ENCODE measurements at regions of chr10 and their contacts with region 1.

Region 1: DNA sequence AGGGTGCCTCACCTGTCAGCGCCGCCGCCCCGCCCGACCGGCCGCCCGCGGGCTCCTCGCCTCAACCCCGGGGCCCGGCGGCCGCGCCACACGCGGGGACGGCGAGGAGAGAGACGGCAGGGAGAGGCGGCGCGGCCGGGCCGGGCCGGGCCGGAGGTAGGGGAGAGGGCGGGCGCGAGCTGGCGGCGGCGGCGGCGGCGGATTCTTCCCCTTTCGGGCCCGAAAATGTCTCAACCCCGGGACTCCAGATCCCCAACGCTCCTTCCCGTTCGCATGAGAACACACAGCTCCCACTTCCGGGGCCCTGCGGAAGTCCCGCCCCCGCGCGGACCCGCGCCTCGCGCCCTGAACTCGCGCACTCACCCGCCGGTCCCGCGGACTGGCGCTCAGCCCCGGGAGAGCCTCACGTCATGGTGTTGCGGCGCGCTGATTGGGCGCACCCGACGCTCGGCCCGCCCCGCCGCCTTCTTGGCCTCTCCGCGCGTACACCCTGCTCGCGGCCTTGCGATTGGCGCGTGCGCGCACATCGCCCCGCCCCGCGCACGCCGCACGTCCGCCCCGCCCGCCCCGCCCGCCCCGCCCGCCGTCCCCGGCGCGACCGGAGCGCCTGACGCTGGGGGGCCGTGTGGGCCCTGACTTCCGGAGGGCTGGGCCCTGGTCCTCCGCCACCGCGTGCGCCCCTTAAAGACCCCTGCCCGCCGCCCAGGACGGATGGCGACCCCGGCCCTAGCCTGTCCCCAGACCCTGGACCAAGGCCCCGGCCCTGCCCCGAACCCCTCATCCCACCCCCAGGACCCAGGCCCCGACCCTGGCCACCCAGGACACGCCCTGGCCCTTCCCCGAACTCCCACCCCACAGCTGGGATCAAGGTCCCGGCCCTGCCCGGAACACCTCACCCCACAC is at the start of gene LARP4B:
- DNase-seq: peak; percentile 94 to 99
- H3K4me3 ChIP-seq: peak within 1 kb of the TSS; percentile 88 to 96
- H3K27ac ChIP-seq: peak within 1 kb of the TSS; percentile 93 to 98
- H3K4me1 ChIP-seq: peaks cover 0 to 44% (median 29%) of the 10 kb centered on the region in 4 donors
- H3K27me3 ChIP-seq: no peaks in the 10 kb centered on the region
- CTCF ChIP-seq: no peak

Region 2: DNA sequence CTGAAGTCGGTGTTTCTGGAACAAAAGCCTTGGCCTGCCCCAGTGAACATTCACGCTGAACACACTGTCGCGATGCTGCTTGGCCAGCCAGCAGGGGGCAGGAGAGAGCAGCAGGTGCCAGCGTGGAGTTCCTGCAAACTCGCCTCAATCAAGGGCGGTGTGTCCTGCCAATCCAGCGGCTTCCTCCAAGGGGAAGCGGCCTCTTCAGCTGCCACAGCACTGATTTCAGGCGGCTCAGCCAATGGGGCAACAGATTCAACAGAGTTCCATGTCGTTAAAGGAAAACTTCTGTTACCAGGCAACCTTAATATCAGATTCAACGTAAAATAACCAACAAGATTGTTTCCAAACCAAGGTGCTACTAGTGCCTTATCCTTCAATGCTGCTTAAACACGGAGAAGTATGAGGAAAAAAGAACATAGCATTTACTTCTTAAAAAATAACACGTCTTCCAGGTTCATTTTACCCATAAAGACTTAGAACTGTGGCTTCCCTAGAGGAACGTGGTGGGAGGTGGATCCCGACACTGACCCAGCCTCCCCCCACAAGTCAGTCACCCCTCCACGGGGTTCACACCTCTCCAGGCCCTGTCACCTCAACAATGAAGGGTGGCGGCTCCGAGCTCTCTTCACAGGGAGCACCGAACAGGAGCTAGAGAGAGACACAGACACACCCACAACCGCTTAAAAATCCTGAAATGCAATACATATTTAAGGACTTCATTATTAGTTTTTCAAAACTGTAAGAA is 420.4 kb before region 1 on chr10:
- intact Hi-C with region 1: loop called (anchors 10 kb)
- DNase-seq: peak; percentile 89 to 95
- H3K4me3 ChIP-seq: no peak overlapping the region
- H3K27ac ChIP-seq: peak overlapping the region; percentile 31 to 32
- H3K4me1 ChIP-seq: peaks cover 0 to 34% (median 17%) of the 10 kb centered on the region in 4 donors
- H3K27me3 ChIP-seq: no peaks in the 10 kb centered on the region
- CTCF ChIP-seq: peak; percentile 93 to 95

Region 3: GRCh38 chr10:987870-988666 is 56.4 kb after region 1 on chr10 and contains the start of gene GTPBP4:
- intact Hi-C with region 1: loop called (anchors 2 kb)
- DNase-seq: peak; percentile 98
- H3K4me3 ChIP-seq: peak within 1 kb of the TSS; percentile 80 to 87
- H3K27ac ChIP-seq: peak within 1 kb of the TSS; percentile 81 to 93
- H3K4me1 ChIP-seq: peaks cover 0 to 29% (median 21%) of the 10 kb centered on the region in 4 donors
- H3K27me3 ChIP-seq: no peaks in the 10 kb centered on the region
- CTCF ChIP-seq: no peak

Region 4: GRCh38 chr10:1056326-1057105 is 124.8 kb after region 1 on chr10 and contains the start of gene WDR37:
- intact Hi-C with region 1: loop called (anchors 5 kb)
- DNase-seq: peak; percentile 82 to 92
- H3K4me3 ChIP-seq: peak within 1 kb of the TSS; percentile 69 to 88
- H3K27ac ChIP-seq: peak within 1 kb of the TSS; percentile 96 to 99
- H3K4me1 ChIP-seq: peaks cover 0 to 42% (median 17%) of the 10 kb centered on the region in 4 donors
- H3K27me3 ChIP-seq: no peaks in the 10 kb centered on the region
- CTCF ChIP-seq: no peak